ENCODE measurements at regions of chrX and their contacts with region 1.

Region 1: DNA sequence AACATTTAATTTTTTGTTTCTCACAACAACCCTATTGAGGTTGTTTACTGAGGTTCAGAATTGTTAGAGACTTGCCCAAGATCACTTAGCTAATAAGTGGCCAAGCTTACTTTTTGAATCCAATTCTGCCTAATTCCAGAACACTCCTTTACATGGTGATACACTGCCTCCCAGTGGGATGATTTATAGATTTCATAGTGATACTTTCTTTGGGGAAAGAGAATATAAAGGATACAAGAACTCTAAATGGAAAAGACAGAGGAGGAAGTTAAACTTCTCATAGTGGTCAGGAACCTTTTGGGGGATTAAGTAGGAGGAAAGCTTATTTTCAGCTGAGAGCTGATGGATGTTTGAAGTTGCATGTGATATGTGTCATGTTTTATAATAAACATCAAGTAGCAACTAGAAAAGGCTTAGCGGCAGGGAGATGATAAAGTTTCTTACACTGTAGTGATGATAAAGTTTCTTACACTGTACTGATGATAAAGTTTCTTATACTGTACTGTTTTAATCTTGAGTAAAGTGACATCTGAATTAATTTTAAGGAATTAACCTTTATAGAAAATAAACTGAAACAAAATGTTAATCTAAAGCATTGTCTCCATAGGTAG is 15.3 kb downstream of the STAG2 start:
- DNase-seq: peak in 1 of 42 donors; percentile 7

Region 2: DNA sequence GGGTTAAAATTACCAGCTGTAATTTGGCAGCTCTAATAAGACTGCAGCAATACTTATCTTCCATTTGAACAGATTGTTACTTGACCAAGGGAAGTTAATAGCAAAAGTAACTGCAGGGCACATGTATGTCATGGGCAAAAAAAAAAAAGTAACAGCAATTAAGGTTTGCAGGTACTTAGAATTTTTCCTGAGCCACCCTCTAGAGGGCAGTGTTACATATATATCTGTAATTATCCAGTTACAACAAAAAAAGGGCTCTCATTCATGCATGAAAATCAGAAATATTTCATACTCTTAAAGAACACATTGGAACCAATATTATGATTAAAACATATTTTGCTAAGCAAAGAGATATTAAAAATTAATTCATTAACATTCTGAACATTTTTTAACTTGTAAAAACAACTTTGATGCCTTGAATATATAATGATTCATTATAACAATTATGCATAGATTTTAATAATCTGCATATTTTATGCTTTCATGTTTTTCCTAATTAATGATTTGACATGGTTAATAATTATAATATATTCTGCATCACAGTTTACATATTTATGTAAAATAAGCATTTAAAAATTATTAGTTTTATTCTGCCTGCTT is 91.9 kb before region 1 on chrX:
- intact Hi-C with region 1: no loop called
- DNase-seq: peak in 10 of 42 donors; percentile 8 to 61 (median 23)

Region 3: GRCh38 chrX:123993326-123993725 is 16.5 kb after region 1 on chrX:
- intact Hi-C with region 1: no loop called
- DNase-seq: no peak

Region 4: DNA sequence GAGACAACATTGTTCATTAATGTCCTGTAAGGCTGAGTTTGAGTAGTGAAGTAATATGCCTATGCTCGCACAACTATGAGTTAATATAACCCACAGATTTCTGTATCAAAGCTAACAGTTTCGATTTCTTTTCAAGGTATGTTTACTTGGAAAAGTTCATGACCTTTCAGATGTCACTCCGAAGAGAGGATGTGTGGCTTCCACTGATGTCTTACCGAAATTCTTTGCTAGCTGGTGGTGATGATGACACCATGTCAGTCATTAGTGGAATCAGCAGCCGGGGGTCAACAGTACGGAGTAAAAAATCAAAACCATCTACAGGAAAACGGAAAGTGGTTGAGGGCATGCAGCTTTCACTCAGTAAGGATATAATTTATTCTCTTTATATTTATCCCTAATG is 109.6 kb after region 1 on chrX:
- intact Hi-C with region 1: loop called (anchors 10 kb)
- DNase-seq: no peak